ENCODE measurements at regions of chr7 and their contacts with region 1.

Region 1: GRCh38 chr7:151539088-151539671 is 19.5 kb upstream of the RHEB start:
- DNase-seq: no peak
- H3K4me3 Mint-ChIP-seq: no peak overlapping the region
- H3K27ac Mint-ChIP-seq: no peak overlapping the region
- H3K4me1 Mint-ChIP-seq: no peaks in the 10 kb centered on the region
- H3K27me3 Mint-ChIP-seq: peaks cover 47% of the 10 kb centered on the region
- CTCF ChIP-seq: no peak

Region 2: GRCh38 chr7:151550656-151551286 is 11.6 kb after region 1 on chr7:
- CTCF ChIA-PET with region 1: interaction called, 10 read pairs
- intact Hi-C with region 1: no loop called
- DNase-seq: peak; percentile 74
- H3K4me3 Mint-ChIP-seq: no peak overlapping the region
- H3K27ac Mint-ChIP-seq: peak overlapping the region; percentile 47
- H3K4me1 Mint-ChIP-seq: peaks cover 38% of the 10 kb centered on the region
- H3K27me3 Mint-ChIP-seq: peaks cover 15% of the 10 kb centered on the region
- CTCF ChIP-seq: no peak

Region 3: DNA sequence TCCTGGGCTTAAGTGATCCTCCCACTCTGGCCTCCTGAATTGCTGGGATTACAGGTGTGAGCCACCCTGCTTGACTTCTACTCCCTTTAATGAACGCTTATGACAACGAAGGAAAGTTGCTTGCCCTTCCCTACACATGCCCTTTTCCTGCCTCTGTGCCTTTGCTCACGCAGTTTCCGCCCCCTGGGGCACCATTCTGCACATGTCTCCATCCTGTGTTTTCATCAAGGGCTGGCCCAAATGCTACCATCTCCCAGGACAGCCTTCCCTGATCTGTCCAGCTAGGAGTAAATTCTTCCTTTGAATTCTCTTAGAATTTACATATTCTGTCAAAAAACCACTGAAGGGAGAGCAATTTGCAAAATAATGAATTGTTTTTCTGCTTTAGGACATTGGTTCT is 946.6 kb after region 1 on chr7:
- CTCF ChIA-PET with region 1: no interaction called
- intact Hi-C with region 1: no loop called
- DNase-seq: no peak
- H3K4me3 Mint-ChIP-seq: no peak overlapping the region
- H3K27ac Mint-ChIP-seq: no peak overlapping the region
- H3K4me1 Mint-ChIP-seq: no peaks in the 10 kb centered on the region
- H3K27me3 Mint-ChIP-seq: no peaks in the 10 kb centered on the region
- CTCF ChIP-seq: no peak

Measured in Calu3 (cell line).